WTC11 (cell line): ENCODE measurements at regions of chr4 and their contacts with region 1.

Region 1: DNA sequence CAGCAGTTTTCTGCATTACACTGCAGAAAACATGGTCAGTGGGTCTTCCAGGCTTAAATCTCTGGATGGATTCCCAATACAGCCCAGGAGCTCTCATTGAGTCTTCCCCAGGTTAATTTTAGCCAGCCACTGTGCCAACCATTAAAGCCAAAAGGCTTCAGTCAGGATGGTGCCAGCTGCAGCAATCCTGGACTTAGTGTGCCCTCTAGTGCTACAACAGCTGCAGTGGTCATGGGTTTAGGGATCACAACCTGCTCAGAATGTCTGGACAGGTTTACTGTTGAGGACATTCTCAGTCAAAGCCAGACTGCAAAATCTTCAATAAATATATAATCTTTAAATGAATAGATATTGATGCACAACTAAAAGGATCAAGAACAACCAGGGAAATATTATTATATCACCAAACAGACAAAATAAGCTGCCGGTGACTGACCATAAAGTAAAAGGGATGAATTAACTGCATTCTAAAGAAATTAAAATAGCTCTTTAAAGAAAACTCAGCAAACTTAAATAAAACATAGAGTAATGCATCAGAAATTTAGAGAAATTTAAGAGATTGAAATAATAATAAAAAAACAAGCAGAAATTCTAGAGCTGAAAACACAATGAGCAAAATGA is 639.9 kb downstream of the SPOCK3 start:
- DNase-seq: peak; percentile 70
- ATAC-seq: peak; percentile 100
- H3K4me3 Mint-ChIP-seq: no peak overlapping the region
- H3K27ac Mint-ChIP-seq: no peak overlapping the region
- H3K4me1 Mint-ChIP-seq: peaks cover 11% of the 10 kb centered on the region
- H3K27me3 Mint-ChIP-seq: no peaks in the 10 kb centered on the region
- CTCF ChIP-seq: peak; percentile 61; the same call in 1 of the 2 replicates

Region 2: GRCh38 chr4:166165829-166166420 is 428.5 kb before region 1 on chr4:
- CTCF ChIA-PET with region 1: interaction called, 36 read pairs
- POLR2A ChIA-PET with region 1: no interaction called
- DNase-seq: no peak
- ATAC-seq: peak; percentile 89
- H3K4me3 Mint-ChIP-seq: no peak overlapping the region
- H3K27ac Mint-ChIP-seq: no peak overlapping the region
- H3K4me1 Mint-ChIP-seq: no peaks in the 10 kb centered on the region
- H3K27me3 Mint-ChIP-seq: no peaks in the 10 kb centered on the region
- CTCF ChIP-seq: peak; percentile 56

Region 3: GRCh38 chr4:166324321-166324720 is 270.1 kb before region 1 on chr4:
- CTCF ChIA-PET with region 1: interaction called, 30 read pairs
- POLR2A ChIA-PET with region 1: no interaction called
- DNase-seq: peak; percentile 61
- ATAC-seq: peak; percentile 91
- H3K4me3 Mint-ChIP-seq: no peak overlapping the region
- H3K27ac Mint-ChIP-seq: no peak overlapping the region
- H3K4me1 Mint-ChIP-seq: peaks cover 9% of the 10 kb centered on the region
- H3K27me3 Mint-ChIP-seq: no peaks in the 10 kb centered on the region
- CTCF ChIP-seq: peak; percentile 69

Region 4: DNA sequence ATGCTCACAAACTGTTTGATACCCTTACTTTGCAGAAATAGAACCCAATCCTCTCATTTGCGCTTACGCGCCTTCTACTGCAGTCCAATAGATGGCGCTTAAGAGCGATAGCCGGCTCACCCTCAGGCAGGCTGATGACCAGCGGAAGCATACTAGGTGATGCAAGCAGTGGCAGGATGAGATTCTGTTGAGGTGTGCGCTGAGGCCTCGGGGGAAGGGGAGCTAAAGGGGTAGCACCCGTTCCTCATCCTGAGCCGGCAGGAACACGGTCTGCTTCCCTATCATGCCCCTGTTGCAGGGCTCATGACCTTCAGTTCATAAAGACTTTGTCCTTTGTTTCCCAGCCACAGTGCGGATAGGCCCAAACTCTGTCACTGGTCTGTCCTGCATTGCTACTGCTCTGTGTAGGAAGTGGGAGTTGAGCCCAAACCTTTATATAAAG is 92.5 kb before region 1 on chr4:
- CTCF ChIA-PET with region 1: interaction called, 36 read pairs
- POLR2A ChIA-PET with region 1: no interaction called
- DNase-seq: peak; percentile 74
- ATAC-seq: peak; percentile 97
- H3K4me3 Mint-ChIP-seq: no peak overlapping the region
- H3K27ac Mint-ChIP-seq: no peak overlapping the region
- H3K4me1 Mint-ChIP-seq: peaks cover 32% of the 10 kb centered on the region
- H3K27me3 Mint-ChIP-seq: peaks cover 3% of the 10 kb centered on the region; the same call in 1 of the 2 replicates
- CTCF ChIP-seq: peak; percentile 63

Region 5: GRCh38 chr4:166577639-166578038 is 16.8 kb before region 1 on chr4:
- CTCF ChIA-PET with region 1: interaction called, 10 read pairs
- POLR2A ChIA-PET with region 1: no interaction called
- DNase-seq: no peak
- ATAC-seq: peak; percentile 66
- H3K4me3 Mint-ChIP-seq: no peak overlapping the region
- H3K27ac Mint-ChIP-seq: no peak overlapping the region
- H3K4me1 Mint-ChIP-seq: peaks cover 4% of the 10 kb centered on the region; the same call in 1 of the 2 replicates
- H3K27me3 Mint-ChIP-seq: no peaks in the 10 kb centered on the region
- CTCF ChIP-seq: no peak